Posterior cingulate gyrus (tissue), 11 donors: ENCODE measurements at regions of chr6 and their contacts with region 1.

Region 1: GRCh38 chr6:142266060-142266459 is 35.7 kb upstream of the ADGRG6 start:
- DNase-seq: no peak

Region 2: GRCh38 chr6:142035890-142036289 is 230.2 kb before region 1 on chr6:
- intact Hi-C with region 1: no loop called
- DNase-seq: no peak

Region 3: DNA sequence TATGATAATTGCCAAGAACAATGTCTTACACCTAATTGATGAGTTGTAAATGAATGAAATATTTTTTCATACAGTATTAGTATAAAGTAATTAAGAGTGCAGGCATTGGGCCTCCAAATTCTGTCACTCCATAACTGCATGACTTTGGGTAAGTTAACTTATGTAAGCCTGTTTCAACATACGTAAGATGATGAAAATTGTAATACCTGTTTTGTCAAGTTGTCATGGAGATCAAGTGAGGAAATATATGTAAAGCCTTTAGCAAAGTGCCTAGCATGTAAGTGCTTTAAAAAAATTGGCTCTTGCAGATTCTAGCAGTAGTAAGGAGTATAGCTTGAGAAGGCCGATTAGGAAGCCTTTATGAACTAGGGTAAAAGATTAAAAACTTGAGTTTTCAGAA is 88.9 kb before region 1 on chr6:
- intact Hi-C with region 1: no loop called
- DNase-seq: no peak

Region 4: GRCh38 chr6:142187209-142187608 is 78.9 kb before region 1 on chr6:
- intact Hi-C with region 1: no loop called
- DNase-seq: peak in 1 of 10 donors; percentile 46

Region 5: GRCh38 chr6:142242269-142242668 is 23.8 kb before region 1 on chr6:
- intact Hi-C with region 1: loop called (anchors 1 kb)
- DNase-seq: no peak